WTC11 (cell line): ENCODE measurements at regions of chr1 and their contacts with region 1.

Region 1: GRCh38 chr1:39609618-39610331 is 29.7 kb downstream of the HEYL start:
- DNase-seq: peak; percentile 96
- ATAC-seq: peak; percentile 96
- H3K4me3 Mint-ChIP-seq: peak overlapping the region; percentile 83
- H3K27ac Mint-ChIP-seq: no peak overlapping the region
- H3K4me1 Mint-ChIP-seq: peaks cover 3% of the 10 kb centered on the region; the same call in 1 of the 2 replicates
- H3K27me3 Mint-ChIP-seq: peaks cover 60% of the 10 kb centered on the region
- CTCF ChIP-seq: peak; percentile 94

Region 2: DNA sequence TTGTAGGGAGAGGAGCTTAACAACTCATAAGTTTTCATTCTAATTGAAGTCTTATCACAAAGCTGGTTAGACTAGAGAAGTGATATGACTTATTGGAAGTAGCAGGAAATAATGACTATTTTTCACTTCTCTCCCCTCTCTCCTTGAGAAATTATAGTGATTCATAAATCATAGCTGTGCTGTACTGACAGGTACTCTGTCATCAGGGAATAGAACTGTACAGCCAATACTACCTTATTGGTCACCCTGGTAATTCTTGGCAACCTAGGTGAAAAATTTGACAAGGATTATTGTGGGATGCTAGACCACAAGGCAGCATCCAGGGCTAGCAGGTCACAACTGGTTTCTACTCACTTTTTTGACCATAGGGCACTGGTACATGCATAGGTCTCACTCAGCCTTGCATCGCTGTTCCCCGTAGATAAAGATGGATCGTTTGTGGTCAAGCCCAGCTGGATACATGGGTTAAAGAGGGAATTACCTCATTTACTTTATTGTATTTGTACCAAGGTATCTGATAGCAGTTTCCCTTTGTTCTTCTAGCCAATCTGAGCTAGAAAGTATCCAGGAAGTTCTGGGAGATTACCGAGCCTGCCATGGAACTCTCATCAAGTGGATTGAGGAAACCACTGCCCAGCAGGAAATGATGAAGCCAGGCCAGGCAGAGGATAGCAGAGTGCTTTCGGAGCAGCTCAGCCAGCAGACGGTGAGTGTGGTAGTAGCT is 291.7 kb before region 1 on chr1:
- CTCF ChIA-PET with region 1: no interaction called
- POLR2A ChIA-PET with region 1: no interaction called
- DNase-seq: no peak
- ATAC-seq: no peak
- H3K4me3 Mint-ChIP-seq: no peak overlapping the region
- H3K27ac Mint-ChIP-seq: no peak overlapping the region
- H3K4me1 Mint-ChIP-seq: no peaks in the 10 kb centered on the region
- H3K27me3 Mint-ChIP-seq: no peaks in the 10 kb centered on the region
- CTCF ChIP-seq: no peak

Region 3: DNA sequence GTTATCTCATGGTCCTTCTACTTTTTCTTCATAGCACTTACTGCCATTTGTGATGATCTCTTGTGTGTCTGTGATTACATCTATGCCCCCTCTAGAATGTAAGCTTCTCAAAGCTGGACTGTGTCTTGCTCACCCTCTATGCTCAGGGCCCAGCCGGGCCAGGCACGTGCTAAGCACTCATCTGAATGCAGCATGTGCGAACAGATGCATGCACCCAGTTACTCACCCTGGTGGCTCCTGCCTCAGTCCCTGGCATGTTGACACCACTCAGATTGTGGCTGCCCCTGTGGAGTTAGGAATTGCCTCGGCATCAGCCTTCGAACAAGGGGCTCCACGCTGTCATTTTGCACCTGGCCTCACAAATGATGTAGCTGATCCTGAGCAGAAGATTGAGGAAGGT is 13.6 kb before region 1 on chr1:
- CTCF ChIA-PET with region 1: interaction called, 13 read pairs
- POLR2A ChIA-PET with region 1: interaction called, 6 read pairs
- DNase-seq: no peak
- ATAC-seq: no peak
- H3K4me3 Mint-ChIP-seq: no peak overlapping the region
- H3K27ac Mint-ChIP-seq: no peak overlapping the region
- H3K4me1 Mint-ChIP-seq: no peaks in the 10 kb centered on the region
- H3K27me3 Mint-ChIP-seq: peaks cover 66% of the 10 kb centered on the region
- CTCF ChIP-seq: no peak

Region 4: GRCh38 chr1:39639305-39640130 is 29.7 kb after region 1 on chr1 and contains the start of gene HEYL:
- CTCF ChIA-PET with region 1: interaction called, 44 read pairs
- POLR2A ChIA-PET with region 1: no interaction called
- DNase-seq: peak; percentile 86
- ATAC-seq: peak; percentile 86
- H3K4me3 Mint-ChIP-seq: peak within 1 kb of the TSS; percentile 69
- H3K27ac Mint-ChIP-seq: no peak within 1 kb of the TSS
- H3K4me1 Mint-ChIP-seq: peaks cover 10% of the 10 kb centered on the region
- H3K27me3 Mint-ChIP-seq: peaks cover 96% of the 10 kb centered on the region
- CTCF ChIP-seq: 0 out of 2 replicates have a peak, but pooled peaks have one; percentile 5
- total RNA-seq, gene HEYL: 2.3 to 3.6 TPM (median 3.2 TPM) in 3 replicates

Region 5: GRCh38 chr1:39666772-39667171 is 57.0 kb after region 1 on chr1:
- CTCF ChIA-PET with region 1: interaction called, 69 read pairs
- POLR2A ChIA-PET with region 1: no interaction called
- DNase-seq: no peak
- ATAC-seq: no peak
- H3K4me3 Mint-ChIP-seq: no peak overlapping the region
- H3K27ac Mint-ChIP-seq: no peak overlapping the region
- H3K4me1 Mint-ChIP-seq: no peaks in the 10 kb centered on the region
- H3K27me3 Mint-ChIP-seq: peaks cover 100% of the 10 kb centered on the region
- CTCF ChIP-seq: no peak

Region 6: DNA sequence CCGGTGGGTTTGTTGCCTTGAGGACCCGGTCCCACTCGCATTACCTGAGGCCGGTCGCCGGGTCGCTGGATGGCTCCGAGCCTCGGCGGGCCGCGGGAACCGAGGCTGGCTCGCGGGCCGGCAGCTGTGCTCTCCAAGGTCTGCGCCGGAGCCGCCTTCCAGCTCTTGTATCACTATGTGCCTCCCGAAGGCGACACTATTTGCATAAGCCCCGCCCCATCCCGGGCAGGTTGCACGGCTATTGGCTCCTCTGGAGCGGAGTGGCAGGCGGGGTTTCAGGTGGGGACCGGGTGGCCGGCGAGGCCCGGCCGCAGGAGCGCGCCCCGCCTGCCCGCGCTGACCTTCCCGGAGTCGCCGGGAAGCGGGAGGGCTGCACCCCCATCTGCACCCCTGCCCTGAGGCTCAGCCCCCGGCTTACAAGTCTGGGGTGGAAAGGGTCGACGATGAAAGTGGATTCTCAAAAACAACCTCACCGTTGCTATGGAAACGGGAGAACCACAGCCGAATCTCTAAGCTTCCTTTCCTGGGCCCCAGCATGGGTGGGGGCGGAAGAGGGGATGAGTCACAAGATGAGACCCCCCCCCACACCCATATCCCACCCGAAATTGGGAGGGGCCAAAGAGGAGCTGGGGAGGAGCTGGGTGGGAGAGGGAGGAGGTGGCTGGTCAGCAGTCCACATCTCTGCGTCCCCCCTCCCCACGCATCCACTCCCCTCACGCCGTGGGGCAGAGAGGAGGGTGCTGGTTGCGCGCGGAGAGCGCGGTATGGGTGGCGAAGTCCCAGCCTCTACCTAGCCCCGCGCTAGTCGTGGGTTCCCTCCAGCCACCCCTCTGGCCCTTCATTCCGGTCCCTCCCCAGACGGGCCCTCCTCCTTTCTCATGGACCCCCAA is 81.7 kb after region 1 on chr1 and contains the start of gene HPCAL4:
- CTCF ChIA-PET with region 1: interaction called, 15 read pairs
- POLR2A ChIA-PET with region 1: no interaction called
- DNase-seq: peak; percentile 98
- ATAC-seq: peak; percentile 98
- H3K4me3 Mint-ChIP-seq: peak within 1 kb of the TSS; percentile 59
- H3K27ac Mint-ChIP-seq: no peak within 1 kb of the TSS
- H3K4me1 Mint-ChIP-seq: peaks cover 4% of the 10 kb centered on the region
- H3K27me3 Mint-ChIP-seq: peaks cover 100% of the 10 kb centered on the region
- CTCF ChIP-seq: no peak
- total RNA-seq, gene HPCAL4: 0.50 to 0.80 TPM (median 0.60 TPM) in 3 replicates

Region 7: DNA sequence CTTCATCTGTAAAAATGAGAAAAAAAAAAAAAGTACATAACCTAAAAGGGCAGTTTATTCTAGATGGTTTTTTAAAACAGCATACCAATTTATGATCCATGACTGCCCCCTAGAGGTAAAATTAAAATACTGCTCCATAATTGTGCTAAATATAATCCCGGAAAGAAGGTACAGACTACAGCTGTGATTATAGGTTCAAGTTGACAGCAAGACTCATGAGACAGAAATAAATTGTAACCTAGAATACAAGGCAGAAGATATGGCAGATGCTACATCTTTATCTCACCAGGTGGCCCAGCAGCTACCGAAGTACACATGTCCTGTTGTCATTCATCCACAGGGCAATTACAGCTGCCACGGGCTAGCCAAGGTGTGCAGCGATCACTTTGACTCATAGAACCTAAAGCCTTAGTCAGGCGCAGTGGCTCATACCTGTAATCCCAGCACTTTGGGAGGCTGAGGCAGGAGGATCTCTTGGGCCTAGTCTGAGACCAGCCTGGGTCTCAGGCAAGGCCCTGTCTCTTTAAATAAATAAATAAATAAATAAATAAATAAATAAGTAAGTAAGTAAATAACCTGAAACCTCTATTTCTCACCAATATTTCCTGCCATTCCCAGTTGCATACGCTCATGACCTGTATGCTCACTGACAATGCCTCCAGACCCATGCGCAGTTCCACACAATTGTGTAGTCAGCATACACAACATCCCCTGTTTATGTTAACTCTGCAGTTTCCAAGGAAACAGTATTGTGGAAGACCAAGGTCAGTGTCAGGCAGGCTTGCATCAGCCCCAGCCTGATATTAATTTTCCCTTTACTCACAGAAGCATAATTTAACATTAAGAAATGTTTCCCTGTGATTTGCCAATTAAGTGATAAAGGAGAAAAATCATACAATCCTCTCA is 110.6 kb after region 1 on chr1:
- CTCF ChIA-PET with region 1: interaction called, 16 read pairs
- POLR2A ChIA-PET with region 1: interaction called, 7 read pairs
- DNase-seq: no peak
- ATAC-seq: no peak; the same call in 1 of the 2 replicates
- H3K4me3 Mint-ChIP-seq: no peak overlapping the region
- H3K27ac Mint-ChIP-seq: no peak overlapping the region
- H3K4me1 Mint-ChIP-seq: no peaks in the 10 kb centered on the region
- H3K27me3 Mint-ChIP-seq: peaks cover 94% of the 10 kb centered on the region
- CTCF ChIP-seq: peak; percentile 51; the same call in 1 of the 2 replicates

Region 8: DNA sequence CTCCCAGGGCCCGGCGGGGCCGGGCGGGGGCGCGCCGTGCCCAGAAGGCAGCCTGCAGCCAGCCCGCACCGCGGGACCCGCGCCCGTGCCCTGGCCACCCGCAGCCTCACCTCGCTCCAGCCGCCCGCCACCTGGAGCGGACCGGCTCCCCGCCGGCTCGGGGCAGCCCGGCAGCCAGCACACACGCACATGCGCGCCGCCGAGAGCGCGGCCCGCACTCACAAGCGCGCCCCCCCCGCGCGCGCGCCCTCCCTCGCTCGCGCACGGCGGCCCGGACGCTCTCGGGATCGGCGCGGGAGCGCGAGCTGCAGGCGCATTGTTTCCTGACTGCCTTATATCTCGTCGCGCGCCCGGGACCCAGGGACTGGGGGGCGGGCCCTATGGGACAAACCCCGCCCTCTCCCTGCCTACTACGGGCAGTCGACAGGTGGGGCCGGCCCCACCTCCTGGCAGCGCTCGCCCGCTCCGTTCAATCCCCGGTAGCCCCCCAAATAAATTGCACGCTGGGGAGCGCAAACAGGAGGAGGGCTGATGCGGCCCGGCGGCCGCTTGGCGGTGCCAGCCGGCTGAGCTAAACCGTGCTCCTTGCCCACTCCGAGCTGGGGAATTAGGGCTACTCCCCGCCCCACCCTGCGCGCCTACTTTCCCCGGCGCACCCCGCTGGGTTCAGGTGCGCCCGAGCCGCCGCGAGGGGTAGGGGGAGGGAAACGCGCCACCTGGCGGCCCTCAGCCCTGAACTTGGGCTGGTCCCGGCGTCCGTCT is 292.1 kb after region 1 on chr1 and contains the start of gene MYCL:
- CTCF ChIA-PET with region 1: interaction called, 10 read pairs
- POLR2A ChIA-PET with region 1: no interaction called
- DNase-seq: peak; percentile 97
- ATAC-seq: peak; percentile 81
- H3K4me3 Mint-ChIP-seq: peak within 1 kb of the TSS; percentile 86
- H3K27ac Mint-ChIP-seq: peak within 1 kb of the TSS; percentile 74; the same call in 1 of the 2 replicates
- H3K4me1 Mint-ChIP-seq: peaks cover 46% of the 10 kb centered on the region
- H3K27me3 Mint-ChIP-seq: peaks cover 30% of the 10 kb centered on the region
- CTCF ChIP-seq: peak; percentile 56
- total RNA-seq, gene MYCL: 31.0 to 32.6 TPM (median 32.2 TPM) in 3 replicates